K562 (cell line): ENCODE measurements at regions of chr3 and their contacts with region 1.

Region 1: DNA sequence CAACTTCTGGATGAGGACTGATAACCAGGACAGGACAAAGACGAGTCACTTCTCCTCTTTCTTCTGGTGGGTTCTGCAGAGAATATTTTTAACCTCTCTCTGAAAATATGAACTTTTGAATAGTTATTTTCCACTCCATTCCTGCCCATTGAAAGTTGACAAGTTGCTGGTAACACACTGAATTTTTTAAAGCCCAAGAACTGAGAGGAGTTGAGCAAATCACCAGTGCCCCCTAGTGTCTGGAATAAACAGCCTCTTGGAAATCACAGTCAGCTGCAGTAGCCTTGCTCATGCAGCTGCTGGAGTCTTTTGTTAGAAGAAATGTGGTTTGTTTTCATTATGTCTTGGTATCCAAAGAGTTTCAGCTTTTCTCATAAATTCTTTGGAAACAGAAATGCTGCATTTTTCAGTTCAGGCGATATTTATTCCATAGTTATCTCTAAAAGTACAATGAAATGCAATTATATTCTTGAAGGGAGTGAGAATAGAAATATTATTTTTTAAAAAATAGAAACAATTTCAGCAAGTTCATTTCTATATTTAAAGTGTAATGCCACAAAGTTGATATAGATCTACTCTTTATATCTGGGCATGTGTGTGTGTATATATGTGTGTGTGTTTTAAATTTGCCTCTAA is 741.0 kb upstream of the CBLB start:
- DNase-seq: peak; percentile 7 to 57 (median 8)
- ATAC-seq: no peak
- H3K4me3 ChIP-seq: no peak overlapping the region
- H3K27ac ChIP-seq: no peak overlapping the region
- H3K4me1 ChIP-seq: no peaks in the 10 kb centered on the region
- H3K27me3 ChIP-seq: no peaks in the 10 kb centered on the region
- CTCF ChIP-seq: peak; percentile 29 to 60 (median 50); a peak in 5 of 6 replicates
- EP300 ChIP-seq: no peak
- POLR2A ChIP-seq: no peak
- RAD21 ChIP-seq: peak; percentile 64 to 74

Region 2: DNA sequence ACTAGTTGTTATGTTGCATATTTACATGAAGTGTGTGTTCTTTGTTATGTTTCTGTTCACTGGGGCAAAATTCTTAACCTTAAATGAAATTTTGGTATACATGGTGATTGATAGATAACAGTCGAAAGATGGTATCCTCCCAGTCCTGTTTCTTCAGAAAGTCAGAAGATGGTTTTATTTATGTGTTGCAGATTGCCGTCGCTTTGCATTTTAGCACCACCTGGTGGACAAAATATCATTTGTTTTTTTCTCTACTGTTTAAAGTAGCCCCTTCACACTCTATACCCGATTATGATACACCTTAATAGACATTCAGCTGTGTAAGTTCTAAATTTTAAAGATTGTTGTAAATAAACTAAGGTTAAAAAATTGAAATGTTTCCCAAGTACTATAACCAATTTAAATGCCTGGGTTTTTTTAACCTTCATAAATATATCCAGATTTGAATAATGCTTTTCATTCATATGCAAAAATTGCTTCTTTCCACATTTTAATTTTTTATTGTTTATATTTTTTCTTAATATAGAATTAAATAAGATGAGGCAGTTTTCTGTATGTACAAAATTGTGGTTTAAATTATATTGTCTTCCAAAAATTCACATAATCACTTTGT is 1090.9 kb before region 1 on chr3:
- CTCF ChIA-PET with region 1: no interaction called
- POLR2A ChIA-PET with region 1: no interaction called
- in situ Hi-C with region 1: no loop called
- intact Hi-C with region 1: loop called (anchors 10 kb)
- DNase-seq: peak; percentile 4 to 44 (median 20)
- ATAC-seq: peak; percentile 68
- H3K4me3 ChIP-seq: no peak overlapping the region
- H3K27ac ChIP-seq: no peak overlapping the region
- H3K4me1 ChIP-seq: no peaks in the 10 kb centered on the region
- H3K27me3 ChIP-seq: no peaks in the 10 kb centered on the region
- CTCF ChIP-seq: peak; percentile 26 to 51 (median 28); a peak in 3 of 6 replicates
- EP300 ChIP-seq: no peak
- POLR2A ChIP-seq: no peak
- RAD21 ChIP-seq: peak; percentile 28 to 70

Region 3: DNA sequence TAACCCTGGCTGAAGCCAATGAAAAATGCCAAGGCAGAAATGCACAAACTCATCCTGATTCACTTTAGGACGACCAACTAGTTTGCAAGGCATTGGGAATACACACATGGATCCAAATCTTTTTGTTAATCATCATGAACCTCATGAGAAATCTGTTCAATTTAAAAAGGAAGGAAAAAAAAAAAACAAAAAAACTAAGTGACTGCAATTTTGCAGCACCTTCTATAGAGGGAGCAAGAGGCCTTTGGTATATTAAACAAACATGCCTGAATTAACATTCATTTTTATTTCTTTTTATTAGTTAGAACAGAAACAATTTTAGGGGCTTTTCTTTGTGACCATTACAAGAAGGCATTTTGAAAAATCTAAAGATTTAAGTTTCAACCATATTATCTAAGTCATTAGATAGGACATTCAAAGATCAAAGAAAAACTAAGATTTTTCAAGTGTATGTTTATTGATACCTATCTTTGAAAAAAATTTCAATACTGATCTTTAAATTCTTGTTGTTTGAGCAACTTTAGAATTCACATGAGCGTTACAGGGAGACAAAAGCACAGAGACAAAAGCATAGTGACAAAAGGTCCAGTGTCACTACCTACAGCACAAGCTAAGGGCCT is 923.4 kb before region 1 on chr3:
- CTCF ChIA-PET with region 1: interaction called, 3 read pairs
- POLR2A ChIA-PET with region 1: no interaction called
- in situ Hi-C with region 1: no loop called
- intact Hi-C with region 1: loop called (anchors 5 kb)
- DNase-seq: peak; percentile 1 to 12 (median 4)
- ATAC-seq: no peak
- H3K4me3 ChIP-seq: no peak overlapping the region
- H3K27ac ChIP-seq: no peak overlapping the region
- H3K4me1 ChIP-seq: no peaks in the 10 kb centered on the region
- H3K27me3 ChIP-seq: no peaks in the 10 kb centered on the region
- CTCF ChIP-seq: peak in 2 of 3 experiments; percentile 8 to 72; a peak in 3 of 6 replicates
- EP300 ChIP-seq: no peak
- POLR2A ChIP-seq: no peak
- RAD21 ChIP-seq: peak; percentile 45 to 64